ENCODE measurements at regions of chr18 and their contacts with region 1.

Region 1: GRCh38 chr18:24086082-24086481 is 52.8 kb upstream of the CABYR start:
- H3K4me3 ChIP-seq: no peak overlapping the region
- H3K27ac ChIP-seq: no peak overlapping the region
- H3K4me1 ChIP-seq: no peaks in the 10 kb centered on the region
- CTCF ChIP-seq: no peak

Region 2: GRCh38 chr18:24075731-24076130 is 10.4 kb before region 1 on chr18:
- CTCF ChIA-PET with region 1: interaction called, 9 read pairs
- POLR2A ChIA-PET with region 1: interaction called, 10 read pairs
- H3K4me3 ChIP-seq: no peak overlapping the region
- H3K27ac ChIP-seq: peak overlapping the region; percentile 61; the same call in 1 of the 2 replicates
- H3K4me1 ChIP-seq: peaks cover 4% of the 10 kb centered on the region
- CTCF ChIP-seq: no peak